Mammary epithelial cell (primary cell): ENCODE measurements at regions of chr2 and their contacts with region 1.

Region 1: GRCh38 chr2:73293534-73294171 is at the start of gene EGR4:
- DNase-seq: peak; percentile 80
- H3K4me3 ChIP-seq: peak within 1 kb of the TSS; percentile 36 to 57 (median 41)
- H3K27ac ChIP-seq: no peak within 1 kb of the TSS
- H3K4me1 ChIP-seq: peaks cover 20% of the 10 kb centered on the region
- H3K27me3 ChIP-seq: peaks cover 26% of the 10 kb centered on the region
- CTCF ChIP-seq: no peak
- total RNA-seq, gene EGR4: 0.12 TPM in 1 of 2 donors, not detected in the other

Region 2: GRCh38 chr2:73243884-73244570 is 49.6 kb before region 1 on chr2:
- CTCF ChIA-PET with region 1: no interaction called
- dilution Hi-C with region 1: loop called (anchors 5 kb)
- in situ Hi-C with region 1: no loop called
- intact Hi-C with region 1: no loop called
- DNase-seq: peak; percentile 92
- H3K4me3 ChIP-seq: no peak overlapping the region
- H3K27ac ChIP-seq: no peak overlapping the region
- H3K4me1 ChIP-seq: peaks cover 20% of the 10 kb centered on the region
- H3K27me3 ChIP-seq: no peaks in the 10 kb centered on the region
- CTCF ChIP-seq: no peak

Region 3: GRCh38 chr2:73383036-73383435 is 89.4 kb after region 1 on chr2:
- CTCF ChIA-PET with region 1: no interaction called
- dilution Hi-C with region 1: loop called (anchors 5 kb)
- in situ Hi-C with region 1: no loop called
- intact Hi-C with region 1: no loop called
- DNase-seq: no peak
- H3K4me3 ChIP-seq: no peak overlapping the region
- H3K27ac ChIP-seq: no peak overlapping the region
- H3K4me1 ChIP-seq: peaks cover 9% of the 10 kb centered on the region
- H3K27me3 ChIP-seq: no peaks in the 10 kb centered on the region
- CTCF ChIP-seq: no peak